CD4-positive, alpha-beta T cell (primary cell): ENCODE measurements at regions of chr2 and their contacts with region 1.

Region 1: DNA sequence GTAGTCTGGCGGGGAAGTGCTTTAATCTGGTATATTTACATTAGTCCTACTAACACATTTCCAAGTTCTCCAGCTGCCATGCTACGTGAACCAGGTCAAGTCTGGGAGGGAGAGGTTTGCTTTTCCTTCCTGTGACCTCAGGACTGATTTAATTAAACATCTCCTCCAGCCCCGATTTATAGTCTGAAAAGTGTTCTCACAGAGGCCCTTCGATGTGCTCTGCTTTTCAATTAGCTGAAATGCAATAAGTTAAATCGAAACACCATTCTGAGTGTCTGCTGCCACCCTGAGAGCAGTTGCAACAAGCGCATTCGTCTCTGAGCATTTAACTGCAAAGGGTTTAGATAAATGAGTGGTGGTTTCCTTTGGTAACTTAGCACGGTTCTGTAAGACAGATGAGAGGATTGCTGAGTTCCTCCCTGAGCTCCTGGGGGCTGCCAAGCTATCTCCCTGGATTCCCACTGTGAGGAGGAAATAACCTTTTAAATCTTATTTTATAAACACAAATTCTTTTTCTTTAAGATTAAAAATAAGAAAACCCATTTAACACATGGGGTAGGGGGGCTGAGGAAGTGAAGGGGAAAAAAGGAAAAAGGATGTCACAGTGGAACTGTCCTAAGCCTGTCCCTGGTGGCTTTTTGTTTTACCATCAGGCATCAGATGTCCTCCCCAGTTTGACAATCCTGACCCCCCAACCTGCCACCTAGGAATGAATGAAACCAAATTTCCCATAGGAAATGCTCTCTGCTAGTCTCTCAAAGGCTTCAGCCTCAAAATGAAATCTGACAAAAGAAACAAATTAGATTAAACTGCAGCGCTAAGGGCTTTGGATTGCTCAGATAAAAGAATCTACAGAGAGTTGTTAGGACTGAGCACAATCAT is 56.5 kb upstream of the CREB1 start:
- DNase-seq: peak in 9 of 14 experiments; percentile 5 to 62 (median 35)
- ATAC-seq: peak; percentile 83
- H3K4me3 ChIP-seq: no peak overlapping the region
- H3K4me3 Mint-ChIP-seq: no peak overlapping the region
- H3K27ac ChIP-seq: no peak overlapping the region
- H3K27ac Mint-ChIP-seq: no peak overlapping the region
- H3K4me1 ChIP-seq: peaks cover 5% of the 10 kb centered on the region
- H3K4me1 Mint-ChIP-seq: peaks cover 24% of the 10 kb centered on the region
- H3K27me3 ChIP-seq: no peaks in the 10 kb centered on the region
- H3K27me3 Mint-ChIP-seq: no peaks in the 10 kb centered on the region
- CTCF ChIP-seq: peak; percentile 41

Region 2: DNA sequence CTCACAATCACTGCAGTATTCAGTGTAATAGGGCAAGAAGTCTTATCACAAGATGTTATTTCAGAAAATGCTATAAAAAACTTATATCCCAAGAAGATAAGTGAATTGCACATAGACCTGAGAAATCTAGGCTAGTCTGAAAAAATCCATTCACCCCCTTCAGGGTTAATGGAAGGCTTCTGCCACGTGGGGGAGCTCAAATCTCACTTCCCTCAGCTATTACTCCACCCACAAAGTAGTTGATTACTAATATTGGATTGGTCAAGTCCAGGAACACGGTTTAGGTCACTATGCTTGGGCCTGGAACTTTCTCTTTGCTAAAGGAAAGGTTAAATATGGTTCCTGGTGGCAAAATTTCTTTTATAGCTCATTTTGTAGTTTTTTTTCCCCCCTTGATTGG is 1081.2 kb before region 1 on chr2:
- CTCF ChIA-PET with region 1: no interaction called
- POLR2A ChIA-PET with region 1: no interaction called
- intact Hi-C with region 1: loop called in 1 of 2 experiments (anchors 10 kb)
- DNase-seq: peak in 4 of 14 experiments; percentile 7 to 48 (median 24)
- ATAC-seq: no peak
- H3K4me3 ChIP-seq: no peak overlapping the region
- H3K4me3 Mint-ChIP-seq: no peak overlapping the region
- H3K27ac ChIP-seq: no peak overlapping the region
- H3K27ac Mint-ChIP-seq: no peak overlapping the region
- H3K4me1 ChIP-seq: no peaks in the 10 kb centered on the region
- H3K4me1 Mint-ChIP-seq: no peaks in the 10 kb centered on the region
- H3K27me3 ChIP-seq: no peaks in the 10 kb centered on the region
- H3K27me3 Mint-ChIP-seq: no peaks in the 10 kb centered on the region
- CTCF ChIP-seq: peak; percentile 19

Region 3: DNA sequence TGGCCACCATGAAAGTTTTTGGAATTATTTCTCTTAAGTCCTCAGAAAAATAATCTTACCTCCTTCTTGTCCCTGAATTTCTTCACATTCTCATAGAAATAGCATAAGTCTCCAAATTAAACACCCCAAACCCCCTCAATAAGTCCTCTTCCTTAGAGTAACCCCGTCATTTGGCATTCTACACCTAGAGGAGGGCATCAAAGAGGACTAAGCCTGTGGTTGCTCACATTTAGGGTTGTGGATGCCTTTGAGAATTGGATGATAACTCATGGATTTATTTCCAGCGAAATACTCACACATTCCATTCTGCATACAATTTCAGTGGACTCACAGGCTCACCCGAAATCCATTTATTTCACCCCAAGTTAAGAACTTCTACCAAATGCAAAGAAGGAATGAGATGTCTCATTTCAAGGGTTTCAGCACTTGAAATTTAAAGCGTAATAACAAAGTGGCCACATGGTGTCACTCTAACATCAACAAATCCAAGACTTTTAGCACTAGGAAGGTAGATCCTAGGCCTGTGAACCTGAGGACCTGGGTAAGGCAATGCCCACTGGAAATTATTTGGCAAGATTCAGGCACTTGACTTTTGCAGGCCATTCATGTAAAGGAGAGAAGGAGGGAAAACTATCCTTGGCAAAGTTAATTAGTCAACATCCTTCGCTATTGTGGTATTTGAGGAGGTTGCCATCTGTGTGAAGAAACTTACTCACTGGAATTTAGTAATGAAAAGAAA is 779.7 kb before region 1 on chr2:
- CTCF ChIA-PET with region 1: no interaction called
- POLR2A ChIA-PET with region 1: no interaction called
- intact Hi-C with region 1: loop called (anchors 1 kb)
- DNase-seq: peak in 9 of 14 experiments; percentile 1 to 77 (median 10)
- ATAC-seq: peak; percentile 34
- H3K4me3 ChIP-seq: no peak overlapping the region
- H3K4me3 Mint-ChIP-seq: no peak overlapping the region
- H3K27ac ChIP-seq: no peak overlapping the region
- H3K27ac Mint-ChIP-seq: no peak overlapping the region
- H3K4me1 ChIP-seq: no peaks in the 10 kb centered on the region
- H3K4me1 Mint-ChIP-seq: peaks cover 4% of the 10 kb centered on the region
- H3K27me3 ChIP-seq: no peaks in the 10 kb centered on the region
- H3K27me3 Mint-ChIP-seq: no peaks in the 10 kb centered on the region
- CTCF ChIP-seq: peak; percentile 77

Region 4: GRCh38 chr2:206981739-206982340 is 491.4 kb before region 1 on chr2:
- CTCF ChIA-PET with region 1: no interaction called
- POLR2A ChIA-PET with region 1: interaction called, 3 read pairs
- intact Hi-C with region 1: loop called (anchors 1 kb)
- DNase-seq: peak; percentile 12 to 68 (median 40)
- ATAC-seq: peak; percentile 67
- H3K4me3 ChIP-seq: no peak overlapping the region
- H3K4me3 Mint-ChIP-seq: no peak overlapping the region
- H3K27ac ChIP-seq: no peak overlapping the region
- H3K27ac Mint-ChIP-seq: no peak overlapping the region
- H3K4me1 ChIP-seq: no peaks in the 10 kb centered on the region
- H3K4me1 Mint-ChIP-seq: peaks cover 26% of the 10 kb centered on the region
- H3K27me3 ChIP-seq: no peaks in the 10 kb centered on the region
- H3K27me3 Mint-ChIP-seq: no peaks in the 10 kb centered on the region
- CTCF ChIP-seq: peak; percentile 39

Region 5: GRCh38 chr2:207133820-207134519 is 339.3 kb before region 1 on chr2:
- CTCF ChIA-PET with region 1: no interaction called
- POLR2A ChIA-PET with region 1: no interaction called
- intact Hi-C with region 1: loop called in 1 of 2 experiments (anchors 5 kb)
- DNase-seq: no peak
- ATAC-seq: no peak
- H3K4me3 ChIP-seq: no peak overlapping the region
- H3K4me3 Mint-ChIP-seq: no peak overlapping the region
- H3K27ac ChIP-seq: no peak overlapping the region
- H3K27ac Mint-ChIP-seq: peak overlapping the region; percentile 77
- H3K4me1 ChIP-seq: peaks cover 38% of the 10 kb centered on the region
- H3K4me1 Mint-ChIP-seq: peaks cover 79% of the 10 kb centered on the region
- H3K27me3 ChIP-seq: no peaks in the 10 kb centered on the region
- H3K27me3 Mint-ChIP-seq: no peaks in the 10 kb centered on the region
- CTCF ChIP-seq: no peak